ENCODE measurements at regions of chr12 and their contacts with region 1.

Region 1: DNA sequence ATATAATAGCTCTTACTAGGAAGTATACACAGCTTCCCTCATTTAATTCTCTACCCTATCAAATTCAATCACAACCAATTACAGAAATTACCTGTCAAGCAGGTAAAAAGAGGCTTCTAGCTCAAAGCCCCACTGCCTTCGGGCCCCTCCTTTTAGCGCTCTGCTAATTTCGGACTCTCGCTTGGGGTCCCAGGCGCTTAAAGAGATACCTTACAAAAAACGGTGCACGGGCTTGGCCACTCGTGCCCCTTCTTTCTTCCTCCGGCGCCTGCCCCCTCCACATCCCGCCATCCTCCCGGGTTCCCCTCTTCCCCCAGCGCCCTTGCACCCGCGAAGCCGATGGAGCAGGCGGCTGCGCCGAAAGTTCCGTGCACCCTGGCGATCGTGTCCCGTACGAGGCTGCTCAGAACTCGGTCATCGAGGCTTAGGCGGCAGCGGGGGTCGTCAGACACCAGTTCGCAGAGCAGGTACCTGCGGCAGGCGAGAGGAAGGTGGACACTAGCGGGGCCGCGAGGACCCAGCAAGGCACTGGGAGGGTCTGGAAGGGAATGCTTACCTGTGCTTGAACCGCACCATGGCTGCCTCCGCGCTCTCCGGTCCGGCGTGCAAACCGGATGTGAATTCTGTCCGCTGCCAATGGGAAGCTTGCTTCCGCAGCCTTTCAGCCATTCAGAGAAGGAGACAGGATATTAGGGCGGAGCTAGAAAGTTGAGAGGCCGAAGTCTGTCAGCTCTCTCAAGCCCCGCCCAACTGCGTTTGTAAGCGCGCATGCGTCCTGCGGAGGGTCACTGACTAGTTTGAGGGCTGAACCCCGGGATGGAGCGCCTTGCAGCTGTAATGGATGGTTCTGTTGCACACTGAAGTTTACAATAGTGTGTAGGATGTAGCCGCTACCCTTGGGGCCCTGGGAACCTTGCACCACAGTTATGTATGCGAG is at the start of gene POP5:
- DNase-seq: peak; percentile 95
- H3K4me3 Mint-ChIP-seq: peak within 1 kb of the TSS; percentile 98
- H3K27ac Mint-ChIP-seq: peak within 1 kb of the TSS; percentile 89
- H3K4me1 Mint-ChIP-seq: peaks cover 36% of the 10 kb centered on the region
- H3K27me3 Mint-ChIP-seq: peaks cover 18% of the 10 kb centered on the region
- total RNA-seq, gene POP5: 83.3 and 85.0 TPM in 2 replicates

Region 2: DNA sequence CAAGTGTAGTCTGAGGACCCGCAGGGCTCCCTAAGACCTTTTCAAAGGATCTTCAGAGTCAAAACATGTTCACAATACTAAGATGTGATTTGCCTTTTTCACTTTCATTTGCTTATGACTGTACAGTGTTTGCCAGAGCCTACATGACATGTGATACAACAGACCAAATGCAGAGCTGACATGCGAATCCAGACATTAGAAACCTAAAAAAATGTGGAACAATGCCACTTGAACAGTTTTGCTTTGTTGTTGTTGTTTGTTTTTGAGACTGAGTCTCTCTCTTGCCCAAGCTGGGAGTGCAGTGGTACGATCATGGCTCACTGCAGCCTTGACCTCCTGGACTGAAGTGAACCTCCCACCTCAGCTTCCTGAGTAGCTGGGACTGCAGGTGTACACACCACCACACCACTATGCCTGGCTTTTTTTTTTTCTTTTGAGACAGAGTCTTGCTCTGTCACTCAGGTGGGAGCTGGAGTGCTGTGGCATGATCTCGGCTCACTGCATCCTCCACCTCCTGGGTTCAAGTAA is 459.2 kb before region 1 on chr12:
- intact Hi-C with region 1: no loop called
- DNase-seq: peak; percentile 15
- H3K4me3 Mint-ChIP-seq: peak overlapping the region; percentile 65
- H3K27ac Mint-ChIP-seq: peak overlapping the region; percentile 83
- H3K4me1 Mint-ChIP-seq: peaks cover 75% of the 10 kb centered on the region
- H3K27me3 Mint-ChIP-seq: no peaks in the 10 kb centered on the region

Region 3: GRCh38 chr12:120495723-120496412 is 85.2 kb before region 1 on chr12 and contains the start of gene DYNLL1:
- intact Hi-C with region 1: loop called (anchors 1 kb)
- DNase-seq: peak; percentile 98
- H3K4me3 Mint-ChIP-seq: peak within 1 kb of the TSS; percentile 99
- H3K27ac Mint-ChIP-seq: peak within 1 kb of the TSS; percentile 89
- H3K4me1 Mint-ChIP-seq: peaks cover 37% of the 10 kb centered on the region
- H3K27me3 Mint-ChIP-seq: no peaks in the 10 kb centered on the region
- total RNA-seq, gene DYNLL1: 341 and 356 TPM in 2 replicates

Region 4: GRCh38 chr12:120562906-120563305 is 18.1 kb before region 1 on chr12:
- intact Hi-C with region 1: no loop called
- DNase-seq: no peak
- H3K4me3 Mint-ChIP-seq: no peak overlapping the region
- H3K27ac Mint-ChIP-seq: peak overlapping the region; percentile 7
- H3K4me1 Mint-ChIP-seq: no peaks in the 10 kb centered on the region
- H3K27me3 Mint-ChIP-seq: no peaks in the 10 kb centered on the region

Region 5: GRCh38 chr12:120649442-120650232 is 68.6 kb after region 1 on chr12:
- intact Hi-C with region 1: loop called (anchors 1 kb)
- DNase-seq: no peak
- H3K4me3 Mint-ChIP-seq: no peak overlapping the region
- H3K27ac Mint-ChIP-seq: no peak overlapping the region
- H3K4me1 Mint-ChIP-seq: peaks cover 15% of the 10 kb centered on the region
- H3K27me3 Mint-ChIP-seq: peaks cover 54% of the 10 kb centered on the region

Region 6: GRCh38 chr12:120904197-120904773 is 323.2 kb after region 1 on chr12 and contains the start of gene SPPL3:
- intact Hi-C with region 1: loop called (anchors 5 kb)
- DNase-seq: peak; percentile 88
- H3K4me3 Mint-ChIP-seq: peak within 1 kb of the TSS; percentile 100
- H3K27ac Mint-ChIP-seq: peak within 1 kb of the TSS; percentile 94
- H3K4me1 Mint-ChIP-seq: peaks cover 21% of the 10 kb centered on the region
- H3K27me3 Mint-ChIP-seq: peaks cover 2% of the 10 kb centered on the region
- total RNA-seq, gene SPPL3: 27.3 and 31.2 TPM in 2 replicates

Region 7: GRCh38 chr12:121095544-121096198 is 514.6 kb after region 1 on chr12:
- intact Hi-C with region 1: loop called (anchors 2 kb)
- DNase-seq: peak; percentile 74
- H3K4me3 Mint-ChIP-seq: peak overlapping the region; percentile 82
- H3K27ac Mint-ChIP-seq: peak overlapping the region; percentile 61
- H3K4me1 Mint-ChIP-seq: peaks cover 33% of the 10 kb centered on the region
- H3K27me3 Mint-ChIP-seq: peaks cover 4% of the 10 kb centered on the region